Caco-2 (cell line): ENCODE measurements at regions of chr19 and their contacts with region 1.

Region 1: GRCh38 chr19:50556282-50557008 is 11.8 kb downstream of the LRRC4B start:
- DNase-seq: peak; percentile 92 to 93
- H3K4me3 ChIP-seq: peak overlapping the region; percentile 45
- H3K4me3 Mint-ChIP-seq: peak overlapping the region; percentile 75
- H3K27ac Mint-ChIP-seq: peak overlapping the region; percentile 20
- H3K4me1 ChIP-seq: peaks cover 11% of the 10 kb centered on the region
- H3K4me1 Mint-ChIP-seq: peaks cover 6% of the 10 kb centered on the region
- H3K27me3 ChIP-seq: no peaks in the 10 kb centered on the region; the same call in 1 of the 2 replicates
- H3K27me3 Mint-ChIP-seq: peaks cover 19% of the 10 kb centered on the region
- CTCF ChIP-seq: peak; percentile 90 to 93

Region 2: GRCh38 chr19:50357178-50358100 is 199.0 kb before region 1 on chr19:
- CTCF ChIA-PET with region 1: interaction called, 20 read pairs
- POLR2A ChIA-PET with region 1: no interaction called
- intact Hi-C with region 1: no loop called
- DNase-seq: peak; percentile 71 to 82
- H3K4me3 ChIP-seq: peak overlapping the region; percentile 36
- H3K4me3 Mint-ChIP-seq: peak overlapping the region; percentile 68
- H3K27ac Mint-ChIP-seq: no peak overlapping the region
- H3K4me1 ChIP-seq: no peaks in the 10 kb centered on the region
- H3K4me1 Mint-ChIP-seq: no peaks in the 10 kb centered on the region
- H3K27me3 ChIP-seq: no peaks in the 10 kb centered on the region
- H3K27me3 Mint-ChIP-seq: no peaks in the 10 kb centered on the region
- CTCF ChIP-seq: peak; percentile 83 to 94

Region 3: DNA sequence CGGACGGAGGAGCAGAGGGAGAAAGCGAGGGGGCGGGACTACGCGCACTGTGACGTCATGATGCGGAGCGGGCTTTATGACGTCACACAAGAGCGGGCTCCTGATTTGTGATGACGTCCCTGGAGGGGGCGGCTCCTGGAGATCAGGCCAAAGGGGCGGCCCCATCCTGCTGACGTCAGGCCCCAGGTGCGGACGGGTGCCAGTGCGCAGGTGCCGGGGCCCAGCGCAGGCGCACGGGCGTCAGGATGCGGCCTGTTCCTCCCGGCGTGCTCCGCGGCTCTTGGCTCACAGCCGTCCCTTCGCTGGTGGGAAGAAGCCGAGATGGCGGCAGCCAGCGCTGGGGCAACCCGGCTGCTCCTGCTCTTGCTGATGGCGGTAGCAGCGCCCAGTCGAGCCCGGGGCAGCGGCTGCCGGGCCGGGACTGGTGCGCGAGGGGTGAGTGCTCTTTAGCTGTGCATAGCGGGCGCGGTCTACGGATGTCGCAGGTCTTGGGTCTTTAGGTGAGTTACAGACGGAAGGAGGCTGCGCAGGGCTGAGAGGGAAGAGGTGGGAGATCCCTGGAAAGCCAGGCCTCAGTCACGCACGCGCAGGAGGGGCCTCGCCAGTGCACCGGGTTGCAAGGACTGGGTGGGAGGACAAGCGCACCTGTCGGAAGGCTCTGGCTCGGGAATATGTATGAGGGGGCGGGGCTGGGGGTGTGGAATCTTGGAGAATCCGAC is 80.1 kb before region 1 on chr19 and contains the starts of genes EMC10 and GARIN5A:
- CTCF ChIA-PET with region 1: no interaction called
- POLR2A ChIA-PET with region 1: no interaction called
- intact Hi-C with region 1: no loop called
- DNase-seq: peak; percentile 85 to 93
- H3K4me3 ChIP-seq: peak within 1 kb of the TSS; percentile 51
- H3K4me3 Mint-ChIP-seq: peak within 1 kb of the TSS; percentile 89
- H3K27ac Mint-ChIP-seq: peak within 1 kb of the TSS; percentile 54
- H3K4me1 ChIP-seq: no peaks in the 10 kb centered on the region
- H3K4me1 Mint-ChIP-seq: no peaks in the 10 kb centered on the region
- H3K27me3 ChIP-seq: no peaks in the 10 kb centered on the region
- H3K27me3 Mint-ChIP-seq: no peaks in the 10 kb centered on the region
- CTCF ChIP-seq: no peak
- total RNA-seq, gene EMC10: 42.9 and 46.3 TPM in 2 replicates
- total RNA-seq, gene GARIN5A: 1.4 and 1.5 TPM in 2 replicates

Region 4: DNA sequence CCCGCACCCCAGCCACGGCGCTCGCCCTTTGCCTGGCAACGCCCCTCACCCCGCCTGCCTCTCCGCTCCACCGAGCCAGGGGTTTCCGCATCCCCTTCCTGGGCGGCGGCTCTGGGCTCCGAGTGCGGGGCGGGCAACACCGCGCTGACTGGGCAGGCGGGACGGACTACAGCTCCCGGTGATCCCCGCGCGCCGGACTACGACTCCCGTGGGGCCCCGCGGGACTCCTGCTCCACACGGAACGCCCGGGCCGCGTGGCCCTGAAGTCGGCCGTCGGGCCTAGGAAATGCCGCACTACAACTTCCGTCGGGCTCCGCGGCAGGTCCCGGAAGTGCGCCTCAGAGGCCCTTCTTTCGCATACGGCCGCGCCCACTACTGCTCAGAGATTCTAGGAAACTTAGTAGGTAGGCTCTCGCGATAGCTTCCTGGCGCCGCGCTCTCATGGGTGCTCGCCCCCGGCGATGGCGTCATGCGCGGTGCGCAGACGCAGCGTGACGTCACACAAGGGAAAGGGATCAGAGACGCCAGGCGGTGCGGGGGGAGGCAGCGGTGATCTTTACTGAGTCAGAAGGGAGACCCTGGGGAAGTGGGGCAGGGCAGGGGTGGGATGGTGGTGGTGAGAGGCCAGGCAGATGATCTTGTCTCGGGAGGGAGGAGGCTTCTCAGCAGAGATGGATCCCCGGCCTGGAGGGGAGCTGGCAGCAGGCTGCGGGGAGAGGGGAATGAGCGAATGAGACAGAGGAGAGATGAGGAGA is 45.2 kb before region 1 on chr19 and contains the start of gene JOSD2:
- CTCF ChIA-PET with region 1: interaction called, 11 read pairs
- POLR2A ChIA-PET with region 1: no interaction called
- intact Hi-C with region 1: no loop called
- DNase-seq: peak; percentile 98 to 99
- H3K4me3 ChIP-seq: peak within 1 kb of the TSS; percentile 58
- H3K4me3 Mint-ChIP-seq: peak within 1 kb of the TSS; percentile 76
- H3K27ac Mint-ChIP-seq: peak within 1 kb of the TSS; percentile 89
- H3K4me1 ChIP-seq: peaks cover 4% of the 10 kb centered on the region; the same call in 1 of the 2 replicates
- H3K4me1 Mint-ChIP-seq: peaks cover 7% of the 10 kb centered on the region
- H3K27me3 ChIP-seq: no peaks in the 10 kb centered on the region
- H3K27me3 Mint-ChIP-seq: no peaks in the 10 kb centered on the region
- CTCF ChIP-seq: no peak
- total RNA-seq, gene JOSD2: 27.7 and 27.9 TPM in 2 replicates

Region 5: DNA sequence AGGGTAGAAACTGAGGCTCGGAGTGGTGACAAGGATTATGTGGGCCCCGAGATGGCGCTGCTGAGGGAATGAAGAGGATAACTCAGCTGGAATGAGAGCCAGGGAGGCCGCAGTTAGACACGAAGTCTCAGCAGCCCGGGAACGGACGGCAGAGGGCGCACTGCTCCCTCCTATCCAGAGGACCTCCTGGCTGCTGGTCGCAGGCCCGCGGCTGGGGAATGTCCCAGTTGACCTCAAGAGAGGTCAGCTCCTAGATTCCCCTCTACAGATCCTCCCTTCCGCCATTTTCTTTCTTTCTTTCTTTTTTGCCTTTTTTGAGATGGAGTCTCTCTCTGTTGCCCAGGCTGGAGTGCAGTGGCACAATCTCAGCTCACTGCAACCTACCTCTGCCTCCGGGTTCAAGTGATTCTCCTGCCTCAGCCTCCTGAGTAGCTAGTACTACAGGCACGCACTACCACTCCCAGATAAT is 18.6 kb before region 1 on chr19:
- CTCF ChIA-PET with region 1: interaction called, 25 read pairs
- POLR2A ChIA-PET with region 1: no interaction called
- intact Hi-C with region 1: loop called (anchors 1 kb)
- DNase-seq: peak; percentile 88 to 89
- H3K4me3 ChIP-seq: no peak overlapping the region
- H3K4me3 Mint-ChIP-seq: no peak overlapping the region
- H3K27ac Mint-ChIP-seq: no peak overlapping the region
- H3K4me1 ChIP-seq: no peaks in the 10 kb centered on the region
- H3K4me1 Mint-ChIP-seq: no peaks in the 10 kb centered on the region
- H3K27me3 ChIP-seq: no peaks in the 10 kb centered on the region
- H3K27me3 Mint-ChIP-seq: no peaks in the 10 kb centered on the region
- CTCF ChIP-seq: peak; percentile 84 to 87

Region 6: DNA sequence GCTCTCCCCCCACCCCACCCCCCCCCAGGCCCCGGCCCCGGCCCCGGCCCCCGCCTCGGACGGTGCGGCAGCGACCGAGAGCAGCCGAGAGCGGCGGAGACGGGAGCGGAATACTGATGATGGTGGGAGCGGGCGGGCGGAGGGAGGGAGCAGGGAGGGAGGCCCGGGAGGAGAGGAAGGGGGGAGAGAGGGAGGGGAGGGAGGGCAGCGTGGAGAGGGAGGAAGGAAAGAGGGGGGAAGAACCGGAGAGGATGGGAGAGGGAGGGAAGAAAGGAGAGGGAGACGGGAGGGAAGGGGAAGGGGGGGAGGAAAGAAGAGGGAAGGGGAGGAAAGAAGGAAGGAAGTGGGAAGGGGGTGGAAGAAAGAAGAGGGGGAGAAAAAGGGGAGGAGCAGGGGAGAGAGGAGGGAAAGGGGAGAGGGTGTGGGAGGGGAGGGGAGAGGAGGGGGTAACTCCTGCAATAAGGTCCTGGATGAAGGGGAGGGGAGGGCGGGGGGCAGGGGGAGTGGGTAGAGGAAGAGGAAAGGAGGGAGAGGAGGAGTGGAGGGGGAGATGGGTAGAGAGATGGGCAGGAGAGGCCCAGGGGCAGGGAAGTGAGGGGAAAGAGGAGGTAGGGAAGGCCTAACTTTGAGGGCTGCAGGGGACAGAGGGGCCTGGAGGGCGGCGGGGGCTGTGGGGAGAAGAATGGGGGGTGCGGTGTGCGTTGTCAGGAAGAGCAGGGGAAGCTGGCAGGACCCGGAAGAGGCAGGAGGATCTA is 12.1 kb after region 1 on chr19 and contains the start of gene LRRC4B:
- CTCF ChIA-PET with region 1: interaction called, 11 read pairs
- POLR2A ChIA-PET with region 1: no interaction called
- intact Hi-C with region 1: no loop called
- DNase-seq: no peak
- H3K4me3 ChIP-seq: no peak within 1 kb of the TSS
- H3K4me3 Mint-ChIP-seq: peak within 1 kb of the TSS; percentile 53
- H3K27ac Mint-ChIP-seq: no peak within 1 kb of the TSS
- H3K4me1 ChIP-seq: no peaks in the 10 kb centered on the region
- H3K4me1 Mint-ChIP-seq: no peaks in the 10 kb centered on the region
- H3K27me3 ChIP-seq: no peaks in the 10 kb centered on the region; the same call in 1 of the 2 replicates
- H3K27me3 Mint-ChIP-seq: peaks cover 43% of the 10 kb centered on the region
- CTCF ChIP-seq: no peak
- total RNA-seq, gene LRRC4B: 0.30 and 0.54 TPM in 2 replicates

Region 7: DNA sequence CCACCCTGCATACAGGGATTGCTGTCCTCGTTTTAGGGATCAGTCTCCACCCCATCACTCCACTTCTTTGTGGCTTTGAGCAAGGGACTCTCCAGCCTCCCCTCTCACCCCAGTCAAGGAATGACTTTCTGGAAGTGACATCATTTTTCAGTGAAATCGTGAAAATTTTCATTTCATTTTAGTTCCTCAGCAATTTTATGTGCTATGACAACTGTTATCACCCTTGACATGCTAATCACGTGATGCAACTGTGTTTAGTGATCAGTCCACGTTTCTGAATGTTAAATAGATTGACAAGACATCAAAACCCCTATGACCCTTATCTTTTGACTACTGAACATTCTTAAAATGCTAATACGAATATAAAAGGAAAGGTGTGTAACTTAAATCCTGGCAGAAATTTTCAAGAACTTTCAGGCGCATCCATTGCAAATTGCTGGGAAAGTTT is 100.8 kb after region 1 on chr19:
- CTCF ChIA-PET with region 1: no interaction called
- POLR2A ChIA-PET with region 1: no interaction called
- intact Hi-C with region 1: no loop called
- DNase-seq: no peak
- H3K4me3 ChIP-seq: no peak overlapping the region
- H3K4me3 Mint-ChIP-seq: no peak overlapping the region
- H3K27ac Mint-ChIP-seq: no peak overlapping the region
- H3K4me1 ChIP-seq: peaks cover 9% of the 10 kb centered on the region
- H3K4me1 Mint-ChIP-seq: peaks cover 24% of the 10 kb centered on the region
- H3K27me3 ChIP-seq: no peaks in the 10 kb centered on the region
- H3K27me3 Mint-ChIP-seq: no peaks in the 10 kb centered on the region
- CTCF ChIP-seq: no peak

Region 8: GRCh38 chr19:50686310-50687032 is 130.0 kb after region 1 on chr19:
- CTCF ChIA-PET with region 1: no interaction called
- POLR2A ChIA-PET with region 1: no interaction called
- intact Hi-C with region 1: no loop called
- DNase-seq: no peak
- H3K4me3 ChIP-seq: no peak overlapping the region
- H3K4me3 Mint-ChIP-seq: peak overlapping the region; percentile 30
- H3K27ac Mint-ChIP-seq: no peak overlapping the region
- H3K4me1 ChIP-seq: no peaks in the 10 kb centered on the region
- H3K4me1 Mint-ChIP-seq: no peaks in the 10 kb centered on the region
- H3K27me3 ChIP-seq: peaks cover 4% of the 10 kb centered on the region
- H3K27me3 Mint-ChIP-seq: peaks cover 31% of the 10 kb centered on the region
- CTCF ChIP-seq: no peak